Psoas muscle (tissue), 8 donors: ENCODE measurements at regions of chr22 and their contacts with region 1.

Region 1: GRCh38 chr22:33920927-33921524 is 750 bp upstream of the LARGE1 start:
- DNase-seq: peak; percentile 99 to 100
- ATAC-seq: peak; percentile 90 to 94 (median 91)
- H3K4me3 ChIP-seq: peak overlapping the region; percentile 69
- H3K27ac ChIP-seq: peak overlapping the region; percentile 42
- H3K4me1 ChIP-seq: peaks cover 37% of the 10 kb centered on the region
- H3K27me3 ChIP-seq: no peaks in the 10 kb centered on the region
- CTCF ChIP-seq: no peak

Region 2: GRCh38 chr22:33756508-33756949 is 164.5 kb before region 1 on chr22:
- intact Hi-C with region 1: loop called in 1 of 2 experiments (anchors 5 kb)
- DNase-seq: no peak
- ATAC-seq: peak; percentile 37 to 84 (median 52)
- H3K4me3 ChIP-seq: no peak overlapping the region
- H3K27ac ChIP-seq: no peak overlapping the region
- H3K4me1 ChIP-seq: peaks cover 17% of the 10 kb centered on the region
- H3K27me3 ChIP-seq: no peaks in the 10 kb centered on the region
- CTCF ChIP-seq: no peak

Region 3: GRCh38 chr22:34105461-34106062 is 184.5 kb after region 1 on chr22:
- intact Hi-C with region 1: loop called (anchors 2 kb)
- DNase-seq: peak; percentile 35 to 63
- ATAC-seq: peak; percentile 69 to 82 (median 81)
- H3K4me3 ChIP-seq: no peak overlapping the region
- H3K27ac ChIP-seq: no peak overlapping the region
- H3K4me1 ChIP-seq: no peaks in the 10 kb centered on the region
- H3K27me3 ChIP-seq: peaks cover 0 to 5% (median 2%) of the 10 kb centered on the region in 3 donors
- CTCF ChIP-seq: peak; percentile 65